ENCODE measurements at regions of chr7 and their contacts with region 1.

Region 1: GRCh38 chr7:111098011-111098925 is 7.3 kb downstream of the LRRN3 start:
- DNase-seq: peak; percentile 56
- H3K4me3 Mint-ChIP-seq: peak overlapping the region; percentile 67
- H3K27ac Mint-ChIP-seq: peak overlapping the region; percentile 77
- H3K4me1 Mint-ChIP-seq: peaks cover 77% of the 10 kb centered on the region
- H3K27me3 Mint-ChIP-seq: no peaks in the 10 kb centered on the region

Region 2: GRCh38 chr7:109844362-109844761 is 1253.9 kb before region 1 on chr7:
- intact Hi-C with region 1: loop called (anchors 10 kb)
- DNase-seq: no peak
- H3K4me3 Mint-ChIP-seq: no peak overlapping the region
- H3K27ac Mint-ChIP-seq: no peak overlapping the region
- H3K4me1 Mint-ChIP-seq: no peaks in the 10 kb centered on the region
- H3K27me3 Mint-ChIP-seq: no peaks in the 10 kb centered on the region

Region 3: GRCh38 chr7:110590415-110590814 is 507.9 kb before region 1 on chr7:
- intact Hi-C with region 1: loop called (anchors 2 kb)
- DNase-seq: no peak
- H3K4me3 Mint-ChIP-seq: no peak overlapping the region
- H3K27ac Mint-ChIP-seq: no peak overlapping the region
- H3K4me1 Mint-ChIP-seq: peaks cover 6% of the 10 kb centered on the region
- H3K27me3 Mint-ChIP-seq: peaks cover 7% of the 10 kb centered on the region

Region 4: DNA sequence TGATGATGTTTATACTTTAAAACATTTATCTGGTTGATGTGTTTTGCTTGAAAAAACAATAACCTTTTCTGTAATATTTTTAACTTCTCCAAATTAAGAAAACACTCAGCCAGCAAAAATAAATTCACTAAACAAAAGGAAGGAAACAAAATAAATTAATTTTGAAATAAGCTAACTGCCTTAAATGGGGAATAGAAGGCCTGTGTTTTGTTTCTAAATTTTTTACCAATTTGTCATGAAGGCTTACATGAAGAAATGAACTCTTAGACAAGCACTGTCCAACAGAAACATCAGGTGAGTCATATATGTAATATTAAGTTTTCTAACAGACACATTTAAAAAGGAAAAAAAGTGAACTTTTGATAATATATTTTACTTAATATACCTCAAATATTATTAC is 61.2 kb after region 1 on chr7:
- intact Hi-C with region 1: no loop called
- DNase-seq: no peak
- H3K4me3 Mint-ChIP-seq: no peak overlapping the region
- H3K27ac Mint-ChIP-seq: no peak overlapping the region
- H3K4me1 Mint-ChIP-seq: peaks cover 6% of the 10 kb centered on the region
- H3K27me3 Mint-ChIP-seq: no peaks in the 10 kb centered on the region

Region 5: GRCh38 chr7:111561885-111562732 is 463.8 kb after region 1 on chr7 and contains the start of gene IMMP2L:
- intact Hi-C with region 1: loop called (anchors 5 kb)
- DNase-seq: peak; percentile 89
- H3K4me3 Mint-ChIP-seq: peak within 1 kb of the TSS; percentile 87
- H3K27ac Mint-ChIP-seq: peak within 1 kb of the TSS; percentile 85
- H3K4me1 Mint-ChIP-seq: peaks cover 31% of the 10 kb centered on the region
- H3K27me3 Mint-ChIP-seq: peaks cover 9% of the 10 kb centered on the region
- total RNA-seq, gene IMMP2L: 12.4 and 20.0 TPM in 2 replicates

Region 6: GRCh38 chr7:112449902-112450806 is 1351.9 kb after region 1 on chr7 and contains the start of gene IFRD1:
- intact Hi-C with region 1: loop called (anchors 10 kb)
- DNase-seq: peak; percentile 96
- H3K4me3 Mint-ChIP-seq: peak within 1 kb of the TSS; percentile 97
- H3K27ac Mint-ChIP-seq: peak within 1 kb of the TSS; percentile 98
- H3K4me1 Mint-ChIP-seq: peaks cover 50% of the 10 kb centered on the region
- H3K27me3 Mint-ChIP-seq: no peaks in the 10 kb centered on the region
- total RNA-seq, gene IFRD1: 49.5 and 51.7 TPM in 2 replicates